Ascending aorta (tissue), 2 donors: ENCODE measurements at regions of chr15 and their contacts with region 1.

Region 1: DNA sequence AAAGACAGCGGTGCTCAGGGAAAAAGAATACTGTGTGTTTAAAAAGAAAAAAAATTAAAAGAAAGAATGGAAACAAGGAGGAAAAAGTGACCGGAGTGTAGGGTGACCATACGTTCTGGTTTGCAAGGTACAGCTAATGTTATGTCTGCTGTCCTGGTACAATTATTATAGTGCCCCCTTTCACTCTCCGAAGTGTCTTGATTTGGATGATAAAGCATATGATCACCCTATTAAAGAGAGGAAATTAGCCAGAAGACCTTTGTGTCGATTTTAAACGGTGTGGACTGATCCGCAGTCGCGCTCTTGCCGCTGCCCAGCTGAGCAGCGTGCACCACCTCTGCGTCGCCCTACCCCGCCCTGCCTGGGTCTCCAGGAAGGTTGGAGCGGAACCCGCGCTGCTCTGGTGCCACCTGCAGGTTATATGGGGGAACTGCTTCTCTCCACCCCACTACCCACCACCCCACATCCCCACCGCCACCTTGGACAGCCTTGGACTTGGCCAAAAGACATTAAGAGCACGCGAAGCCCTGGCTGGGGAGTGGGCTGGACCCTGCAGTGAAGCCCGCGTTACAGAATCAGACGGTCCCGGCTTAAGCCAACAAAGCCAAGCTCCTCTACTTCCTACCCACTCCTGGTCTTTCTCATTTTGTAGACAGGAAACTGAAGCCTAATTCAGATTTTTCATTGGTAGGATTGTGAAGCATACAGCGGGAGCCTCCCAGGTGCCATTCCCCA is 41.2 kb upstream of the UBE2Q2 start:
- DNase-seq: peak in 1 of 2 donors; percentile 86
- H3K4me3 ChIP-seq: peak overlapping the region in 1 of 2 donors; percentile 41
- H3K27ac ChIP-seq: no peak overlapping the region
- H3K4me1 ChIP-seq: peaks cover 0 to 4% of the 10 kb centered on the region in 2 donors
- H3K27me3 ChIP-seq: no peaks in the 10 kb centered on the region
- CTCF ChIP-seq: peak; percentile 82 to 97 (median 96)

Region 2: GRCh38 chr15:75367913-75368688 is 433.9 kb before region 1 on chr15 and contains the start of gene MAN2C1:
- intact Hi-C with region 1: loop called (anchors 5 kb)
- DNase-seq: peak; percentile 73 to 97
- H3K4me3 ChIP-seq: peak within 1 kb of the TSS; percentile 94 to 98
- H3K27ac ChIP-seq: peak within 1 kb of the TSS; percentile 99
- H3K4me1 ChIP-seq: peaks cover 5 to 8% of the 10 kb centered on the region in 2 donors
- H3K27me3 ChIP-seq: no peaks in the 10 kb centered on the region
- CTCF ChIP-seq: peak; percentile 69 to 82 (median 72)
- total RNA-seq, gene MAN2C1: 447 TPM

Region 3: DNA sequence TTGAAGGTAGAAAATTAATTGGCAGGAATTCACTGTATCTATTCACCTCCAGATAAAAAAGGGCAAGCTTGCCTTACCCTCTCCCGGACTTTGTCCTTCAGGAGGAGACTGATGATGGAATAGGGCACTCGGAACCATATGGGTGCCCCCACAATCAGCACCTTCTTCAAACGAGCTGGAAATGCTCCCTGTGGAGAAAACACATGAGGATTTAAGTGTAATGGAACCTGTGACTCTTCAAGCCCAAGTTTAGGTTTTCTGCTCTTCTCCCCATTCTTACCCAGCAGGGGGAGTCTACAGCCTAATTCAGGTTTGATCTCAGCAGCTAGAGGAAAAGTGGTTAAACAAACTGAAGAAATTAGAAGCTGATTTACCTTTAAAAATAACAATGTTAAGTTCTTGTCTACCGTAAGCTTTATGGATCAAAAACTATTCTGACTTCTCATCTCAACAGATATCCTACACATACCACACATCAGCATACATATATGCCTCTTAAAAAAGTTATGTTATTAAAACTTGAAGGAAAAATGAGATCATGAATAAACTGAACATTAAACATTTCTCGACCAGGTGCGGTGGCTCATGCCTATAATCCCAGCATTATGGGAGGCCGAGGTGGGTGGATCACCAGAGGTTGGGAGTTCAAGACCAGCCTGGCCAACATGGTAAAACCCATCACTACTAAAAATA is 293.0 kb before region 1 on chr15:
- intact Hi-C with region 1: loop called (anchors 5 kb)
- DNase-seq: no peak
- H3K4me3 ChIP-seq: no peak overlapping the region
- H3K27ac ChIP-seq: no peak overlapping the region
- H3K4me1 ChIP-seq: no peaks in the 10 kb centered on the region
- H3K27me3 ChIP-seq: no peaks in the 10 kb centered on the region
- CTCF ChIP-seq: peak in 2 of 3 experiments; percentile 28 to 46

Region 4: GRCh38 chr15:75639709-75640482 is 162.1 kb before region 1 on chr15 and contains the start of gene IMP3:
- intact Hi-C with region 1: loop called (anchors 5 kb)
- DNase-seq: peak; percentile 84 to 97
- H3K4me3 ChIP-seq: peak within 1 kb of the TSS; percentile 82 to 94
- H3K27ac ChIP-seq: peak within 1 kb of the TSS; percentile 88 to 95
- H3K4me1 ChIP-seq: peaks cover 9 to 32% of the 10 kb centered on the region in 2 donors
- H3K27me3 ChIP-seq: no peaks in the 10 kb centered on the region
- CTCF ChIP-seq: no peak
- total RNA-seq, gene IMP3: 159 TPM

Region 5: DNA sequence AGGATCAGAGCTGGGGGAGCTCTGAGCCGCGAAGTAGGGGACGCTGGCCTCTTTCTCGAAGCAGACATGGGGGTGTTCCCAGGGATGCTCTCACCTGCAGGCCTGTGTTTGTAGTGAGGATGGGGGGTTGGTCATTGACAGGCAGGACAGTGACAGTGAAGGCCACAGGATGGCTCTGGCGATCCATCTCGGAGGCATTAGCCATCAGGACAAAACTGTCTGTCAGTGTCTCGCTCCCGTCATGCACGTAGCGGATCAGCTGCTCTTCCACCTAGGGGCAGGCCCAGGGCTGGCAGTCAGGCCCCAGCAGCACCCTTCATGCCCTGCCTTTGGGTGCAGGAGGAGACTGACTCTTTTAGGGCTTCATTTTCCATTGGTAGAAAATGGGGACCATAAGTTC is 117.4 kb before region 1 on chr15:
- intact Hi-C with region 1: loop called (anchors 2 kb)
- DNase-seq: no peak
- H3K4me3 ChIP-seq: no peak overlapping the region
- H3K27ac ChIP-seq: peak overlapping the region in 1 of 2 donors; percentile 18
- H3K4me1 ChIP-seq: peaks cover 0 to 9% of the 10 kb centered on the region in 2 donors
- H3K27me3 ChIP-seq: no peaks in the 10 kb centered on the region
- CTCF ChIP-seq: no peak

Region 6: DNA sequence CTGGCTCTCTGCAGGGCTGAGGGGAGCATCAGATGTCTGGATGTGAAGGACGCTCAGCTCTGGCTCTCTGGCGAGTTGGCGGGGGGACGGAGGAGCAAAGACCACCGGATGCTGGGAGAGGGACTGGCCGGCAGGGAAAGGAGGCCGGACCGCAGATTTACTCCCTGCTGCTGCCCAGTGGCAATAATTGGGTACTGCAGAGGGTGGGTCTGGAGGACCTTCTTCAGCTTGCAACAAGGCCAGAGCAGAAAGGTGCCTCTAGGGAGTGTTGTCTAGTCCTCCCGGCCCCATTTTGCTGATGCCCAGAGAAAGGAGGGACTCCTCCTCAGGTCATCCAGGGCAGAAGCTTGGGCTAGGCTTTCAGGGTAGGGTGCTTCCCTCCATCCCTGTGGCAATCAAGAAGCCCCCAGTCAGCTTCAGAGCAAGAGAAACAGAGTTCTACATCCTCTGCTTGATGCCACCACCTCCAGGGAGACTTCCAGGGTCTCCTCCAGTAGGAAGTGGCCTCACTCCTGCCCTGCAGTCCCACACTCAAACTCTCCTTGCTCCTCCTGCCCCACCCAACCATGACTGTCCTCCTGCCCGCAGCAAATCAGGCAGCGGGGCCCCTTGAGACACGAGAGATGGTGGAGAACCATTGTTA is 69.1 kb before region 1 on chr15:
- intact Hi-C with region 1: loop called (anchors 2 kb)
- DNase-seq: peak in 1 of 2 donors; percentile 83
- H3K4me3 ChIP-seq: no peak overlapping the region
- H3K27ac ChIP-seq: no peak overlapping the region
- H3K4me1 ChIP-seq: peaks cover 0 to 3% of the 10 kb centered on the region in 2 donors
- H3K27me3 ChIP-seq: no peaks in the 10 kb centered on the region
- CTCF ChIP-seq: peak; percentile 88 to 97 (median 90)

Region 7: GRCh38 chr15:75758071-75758872 is 43.8 kb before region 1 on chr15:
- intact Hi-C with region 1: no loop called
- DNase-seq: peak; percentile 46 to 94
- H3K4me3 ChIP-seq: peak overlapping the region; percentile 59 to 62
- H3K27ac ChIP-seq: peak overlapping the region; percentile 75 to 79
- H3K4me1 ChIP-seq: peaks cover 3 to 12% of the 10 kb centered on the region in 2 donors
- H3K27me3 ChIP-seq: no peaks in the 10 kb centered on the region
- CTCF ChIP-seq: peak in 2 of 3 experiments; percentile 22 to 43

Region 8: DNA sequence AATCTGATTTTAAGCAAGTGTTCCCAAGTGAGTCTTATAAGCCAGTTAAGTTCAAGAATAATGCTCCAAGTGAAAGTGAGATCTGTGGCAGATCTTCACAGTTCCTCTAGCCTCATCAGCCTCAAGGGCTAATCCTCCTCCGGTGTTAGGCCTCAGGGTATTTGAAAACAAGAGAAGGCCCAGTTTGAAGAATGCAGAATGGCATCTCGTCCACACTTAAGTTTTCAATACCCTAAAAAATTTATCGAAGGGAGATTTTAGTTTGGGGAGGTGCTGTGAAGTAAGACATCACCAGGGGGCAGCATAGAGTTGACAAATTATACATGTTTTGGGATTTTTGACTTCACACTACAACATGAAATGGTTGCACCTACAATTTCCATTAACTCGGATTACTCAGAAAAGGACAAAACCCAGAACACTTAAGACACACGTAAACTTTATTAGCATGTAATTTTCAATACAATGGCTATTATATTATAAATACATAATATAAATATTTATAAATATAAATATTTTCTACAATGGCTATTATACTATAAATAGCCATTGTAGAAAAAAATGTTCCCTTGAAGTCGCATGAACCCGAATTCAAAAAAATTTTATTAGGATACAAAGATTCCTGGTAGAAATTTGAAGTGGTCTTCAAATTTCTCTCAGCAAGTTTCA is 255.4 kb after region 1 on chr15:
- intact Hi-C with region 1: no loop called
- DNase-seq: no peak
- H3K4me3 ChIP-seq: peak overlapping the region in 1 of 2 donors; percentile 24
- H3K27ac ChIP-seq: no peak overlapping the region
- H3K4me1 ChIP-seq: peaks cover 4 to 10% of the 10 kb centered on the region in 2 donors
- H3K27me3 ChIP-seq: no peaks in the 10 kb centered on the region
- CTCF ChIP-seq: peak; percentile 35 to 75 (median 67)